ENCODE measurements at regions of chrX and their contacts with region 1.

Region 1: GRCh38 chrX:43939187-43939926 is 33.8 kb downstream of the NDP start:
- DNase-seq: no peak

Region 2: GRCh38 chrX:43836435-43837184 is 102.7 kb before region 1 on chrX:
- intact Hi-C with region 1: loop called (anchors 2 kb)
- DNase-seq: no peak

Measured in cardiac septum (tissue), 1 donor.